Endothelial cell of umbilical vein (primary cell): ENCODE measurements at regions of chr4 and their contacts with region 1.

Region 1: DNA sequence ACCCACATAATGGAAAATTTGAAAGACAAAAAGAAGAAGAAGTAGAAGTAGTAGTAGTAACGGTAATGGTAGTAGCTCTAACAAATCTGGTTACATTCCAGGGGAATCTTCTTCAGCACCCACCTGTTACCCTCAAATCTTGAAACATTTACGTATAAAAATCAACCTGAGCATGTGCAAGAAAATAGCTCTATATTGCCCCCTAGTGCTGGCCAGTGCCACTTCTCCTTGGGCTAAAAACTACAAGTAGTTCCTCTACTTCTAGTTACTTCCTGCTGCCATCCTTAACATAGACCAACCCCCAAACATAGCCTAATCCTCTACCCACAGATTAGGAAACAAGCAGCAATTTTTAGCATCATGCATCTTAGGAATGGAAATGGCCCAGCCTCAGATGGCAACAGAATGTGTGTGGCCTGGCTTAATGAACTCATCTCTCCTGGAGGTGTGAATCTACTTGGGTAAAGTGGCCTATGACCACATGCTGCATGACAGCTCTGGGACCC is 3.1 kb downstream of the PDGFC start:
- DNase-seq: peak; percentile 81
- H3K4me3 ChIP-seq: no peak overlapping the region
- H3K27ac ChIP-seq: peak overlapping the region; percentile 20
- H3K4me1 ChIP-seq: peaks cover 30% of the 10 kb centered on the region
- H3K27me3 ChIP-seq: no peaks in the 10 kb centered on the region
- CTCF ChIP-seq: peak; percentile 64 to 77
- POLR2A ChIP-seq: no peak

Region 2: GRCh38 chr4:156169011-156169410 is 799.5 kb before region 1 on chr4:
- CTCF ChIA-PET with region 1: interaction called, 4 read pairs
- POLR2A ChIA-PET with region 1: no interaction called
- dilution Hi-C with region 1: no loop called
- intact Hi-C with region 1: loop called (anchors 2 kb)
- DNase-seq: peak; percentile 42
- H3K4me3 ChIP-seq: no peak overlapping the region
- H3K27ac ChIP-seq: no peak overlapping the region
- H3K4me1 ChIP-seq: no peaks in the 10 kb centered on the region
- H3K27me3 ChIP-seq: no peaks in the 10 kb centered on the region
- CTCF ChIP-seq: peak; percentile 16 to 45
- POLR2A ChIP-seq: no peak

Region 3: GRCh38 chr4:156265407-156265806 is 703.1 kb before region 1 on chr4:
- CTCF ChIA-PET with region 1: no interaction called
- POLR2A ChIA-PET with region 1: no interaction called
- dilution Hi-C with region 1: no loop called
- intact Hi-C with region 1: no loop called
- DNase-seq: no peak
- H3K4me3 ChIP-seq: no peak overlapping the region
- H3K27ac ChIP-seq: no peak overlapping the region
- H3K4me1 ChIP-seq: no peaks in the 10 kb centered on the region
- H3K27me3 ChIP-seq: no peaks in the 10 kb centered on the region
- CTCF ChIP-seq: no peak
- POLR2A ChIP-seq: no peak

Region 4: GRCh38 chr4:156584100-156584499 is 384.4 kb before region 1 on chr4:
- CTCF ChIA-PET with region 1: no interaction called
- POLR2A ChIA-PET with region 1: no interaction called
- dilution Hi-C with region 1: no loop called
- intact Hi-C with region 1: no loop called
- DNase-seq: peak; percentile 23
- H3K4me3 ChIP-seq: no peak overlapping the region
- H3K27ac ChIP-seq: no peak overlapping the region
- H3K4me1 ChIP-seq: peaks cover 9% of the 10 kb centered on the region
- H3K27me3 ChIP-seq: no peaks in the 10 kb centered on the region
- CTCF ChIP-seq: no peak
- POLR2A ChIP-seq: no peak

Region 5: DNA sequence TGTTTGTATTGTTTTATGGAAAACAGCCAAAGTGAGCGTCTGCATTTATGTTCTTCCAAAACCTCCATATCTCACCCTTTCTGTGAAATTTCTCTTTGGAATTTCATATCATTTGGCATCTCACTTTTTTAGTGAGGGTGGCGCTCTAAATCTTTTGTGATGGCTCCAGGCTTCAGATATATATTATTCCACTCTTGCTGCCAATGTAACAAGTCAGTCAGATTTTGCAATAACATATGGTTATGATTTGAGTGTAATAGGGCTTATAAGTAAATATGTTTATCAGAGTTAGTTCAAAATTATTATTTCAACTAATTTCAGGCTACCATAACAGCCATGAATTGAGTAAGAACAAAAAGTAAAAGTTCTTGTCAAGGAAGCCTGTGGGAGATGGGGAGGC is 311.6 kb before region 1 on chr4:
- CTCF ChIA-PET with region 1: no interaction called
- POLR2A ChIA-PET with region 1: no interaction called
- dilution Hi-C with region 1: no loop called
- intact Hi-C with region 1: no loop called
- DNase-seq: no peak
- H3K4me3 ChIP-seq: no peak overlapping the region
- H3K27ac ChIP-seq: no peak overlapping the region
- H3K4me1 ChIP-seq: peaks cover 9% of the 10 kb centered on the region
- H3K27me3 ChIP-seq: no peaks in the 10 kb centered on the region
- CTCF ChIP-seq: no peak
- POLR2A ChIP-seq: no peak

Region 6: DNA sequence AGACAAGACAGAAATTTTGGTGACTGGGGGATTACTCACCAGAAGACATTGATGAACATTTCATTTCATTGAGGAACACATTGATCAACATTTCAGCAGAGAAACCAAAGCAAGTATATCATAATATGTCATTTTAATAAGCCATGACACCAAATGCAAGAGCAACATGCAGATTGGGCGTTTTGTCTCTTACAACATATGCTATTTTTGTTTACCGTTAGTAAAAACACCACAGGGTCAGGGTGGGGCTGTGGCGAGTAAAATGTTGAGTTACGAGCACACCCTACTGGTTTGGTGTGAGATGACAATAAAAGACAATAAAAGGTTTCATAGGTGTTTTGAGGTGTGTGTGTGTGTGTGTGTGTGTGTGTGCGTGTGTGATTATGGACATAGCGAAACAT is 291.4 kb before region 1 on chr4:
- CTCF ChIA-PET with region 1: interaction called, 4 read pairs
- POLR2A ChIA-PET with region 1: no interaction called
- dilution Hi-C with region 1: no loop called
- intact Hi-C with region 1: loop called (anchors 1 kb)
- DNase-seq: peak; percentile 19
- H3K4me3 ChIP-seq: no peak overlapping the region
- H3K27ac ChIP-seq: no peak overlapping the region
- H3K4me1 ChIP-seq: no peaks in the 10 kb centered on the region
- H3K27me3 ChIP-seq: no peaks in the 10 kb centered on the region
- CTCF ChIP-seq: peak in 1 of 2 donors; percentile 8
- POLR2A ChIP-seq: no peak

Region 7: GRCh38 chr4:156778606-156779005 is 189.9 kb before region 1 on chr4:
- CTCF ChIA-PET with region 1: interaction called, 3 read pairs
- POLR2A ChIA-PET with region 1: no interaction called
- dilution Hi-C with region 1: no loop called
- intact Hi-C with region 1: loop called (anchors 5 kb)
- DNase-seq: no peak
- H3K4me3 ChIP-seq: no peak overlapping the region
- H3K27ac ChIP-seq: no peak overlapping the region
- H3K4me1 ChIP-seq: peaks cover 20% of the 10 kb centered on the region
- H3K27me3 ChIP-seq: no peaks in the 10 kb centered on the region
- CTCF ChIP-seq: no peak
- POLR2A ChIP-seq: no peak

Region 8: GRCh38 chr4:156999175-156999516 is 30.6 kb after region 1 on chr4:
- CTCF ChIA-PET with region 1: interaction called, 22 read pairs
- POLR2A ChIA-PET with region 1: no interaction called
- dilution Hi-C with region 1: no loop called
- intact Hi-C with region 1: loop called (anchors 1 kb)
- DNase-seq: peak; percentile 98
- H3K4me3 ChIP-seq: peak overlapping the region in 1 of 3 experiments; percentile 2
- H3K27ac ChIP-seq: peak overlapping the region; percentile 62
- H3K4me1 ChIP-seq: peaks cover 23% of the 10 kb centered on the region
- H3K27me3 ChIP-seq: no peaks in the 10 kb centered on the region
- CTCF ChIP-seq: no peak
- POLR2A ChIP-seq: no peak

Region 9: GRCh38 chr4:157204634-157205244 is 236.2 kb after region 1 on chr4:
- CTCF ChIA-PET with region 1: no interaction called
- POLR2A ChIA-PET with region 1: no interaction called
- dilution Hi-C with region 1: no loop called
- intact Hi-C with region 1: loop called (anchors 5 kb)
- DNase-seq: no peak
- H3K4me3 ChIP-seq: no peak overlapping the region
- H3K27ac ChIP-seq: no peak overlapping the region
- H3K4me1 ChIP-seq: no peaks in the 10 kb centered on the region
- H3K27me3 ChIP-seq: no peaks in the 10 kb centered on the region
- CTCF ChIP-seq: peak; percentile 42 to 49
- POLR2A ChIP-seq: no peak